Activated CD8-positive, alpha-beta T cell treated with anti-CD3 and anti-CD28 coated beads for 36 hours (primary cell): ENCODE measurements at regions of chr6 and their contacts with region 1.

Region 1: DNA sequence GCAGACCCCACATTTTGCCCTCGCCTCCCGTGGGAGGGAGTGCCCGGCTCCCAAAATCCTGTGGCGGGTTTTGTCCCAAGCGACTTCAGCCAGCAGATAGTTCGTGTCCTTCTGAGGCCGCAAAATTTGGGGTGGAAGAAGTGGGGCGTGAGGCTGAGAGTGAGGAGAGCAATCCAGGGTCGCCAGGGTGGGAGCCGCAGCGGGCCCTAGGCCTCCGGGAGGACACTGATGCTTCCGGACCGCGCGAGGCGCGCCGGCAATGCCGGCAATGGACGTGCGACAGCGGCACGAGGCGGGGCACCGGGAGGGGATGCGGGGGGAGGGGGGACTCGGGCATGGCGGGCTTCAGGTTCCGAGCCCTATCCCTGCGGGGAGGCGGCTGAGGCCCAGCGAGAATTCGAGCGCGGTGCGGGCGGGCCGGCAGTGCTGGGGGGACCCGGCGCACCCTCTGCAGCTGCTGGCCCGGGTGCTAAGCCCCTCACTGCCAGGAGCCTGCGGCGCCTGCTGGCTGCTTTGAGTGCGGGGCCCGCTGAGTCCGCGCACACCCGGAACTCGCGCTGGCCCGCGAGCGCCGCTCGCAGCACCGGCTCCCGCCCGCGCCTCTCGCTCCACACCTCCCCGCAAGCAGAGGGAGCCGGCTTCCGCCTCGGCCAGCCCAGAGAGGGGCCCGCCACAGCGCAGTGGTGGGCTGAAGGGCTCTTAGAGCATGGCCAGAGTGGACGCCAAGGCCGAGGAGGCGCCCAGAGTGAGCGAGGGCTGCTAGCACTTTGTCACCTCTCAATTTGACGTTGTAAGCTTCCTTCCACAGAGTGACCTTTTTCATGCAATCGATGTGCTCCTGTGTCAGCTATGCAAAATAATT is 143.8 kb downstream of the LPA start:
- DNase-seq: peak; percentile 64
- ATAC-seq: peak; percentile 83
- H3K4me3 Mint-ChIP-seq: peak overlapping the region; percentile 87
- H3K27ac Mint-ChIP-seq: peak overlapping the region; percentile 92
- H3K4me1 Mint-ChIP-seq: peaks cover 10% of the 10 kb centered on the region
- H3K27me3 Mint-ChIP-seq: peaks cover 3% of the 10 kb centered on the region
- CTCF ChIP-seq: peak; percentile 96

Region 2: GRCh38 chr6:159572439-159573110 is 947.7 kb before region 1 on chr6:
- CTCF ChIA-PET with region 1: no interaction called
- POLR2A ChIA-PET with region 1: no interaction called
- intact Hi-C with region 1: no loop called
- DNase-seq: no peak
- ATAC-seq: no peak
- H3K4me3 Mint-ChIP-seq: no peak overlapping the region
- H3K27ac Mint-ChIP-seq: no peak overlapping the region
- H3K4me1 Mint-ChIP-seq: no peaks in the 10 kb centered on the region
- H3K27me3 Mint-ChIP-seq: peaks cover 10% of the 10 kb centered on the region
- CTCF ChIP-seq: no peak

Region 3: DNA sequence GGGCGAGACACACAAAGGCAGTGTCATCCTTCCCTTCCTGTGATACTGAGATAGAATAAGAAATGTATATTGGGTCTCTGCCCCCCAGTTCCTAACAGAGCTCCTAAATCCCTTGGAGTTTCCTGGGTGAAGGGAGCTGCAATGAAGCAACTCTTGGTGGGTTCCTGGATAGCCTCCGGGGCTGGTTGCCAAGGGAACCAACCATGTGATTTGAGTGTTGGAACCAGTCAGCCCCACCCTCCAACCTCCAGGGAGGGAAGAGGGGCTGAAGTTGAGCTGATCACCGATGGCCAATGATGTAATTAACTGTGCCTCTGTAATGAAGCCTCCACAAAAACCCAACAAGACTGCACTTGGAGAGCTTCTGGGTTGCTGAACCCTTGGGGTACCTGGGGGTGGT is 55.5 kb before region 1 on chr6:
- CTCF ChIA-PET with region 1: interaction called, 10 read pairs
- POLR2A ChIA-PET with region 1: no interaction called
- intact Hi-C with region 1: no loop called
- DNase-seq: no peak
- ATAC-seq: no peak
- H3K4me3 Mint-ChIP-seq: no peak overlapping the region
- H3K27ac Mint-ChIP-seq: no peak overlapping the region
- H3K4me1 Mint-ChIP-seq: peaks cover 43% of the 10 kb centered on the region
- H3K27me3 Mint-ChIP-seq: peaks cover 37% of the 10 kb centered on the region
- CTCF ChIP-seq: no peak

Region 4: DNA sequence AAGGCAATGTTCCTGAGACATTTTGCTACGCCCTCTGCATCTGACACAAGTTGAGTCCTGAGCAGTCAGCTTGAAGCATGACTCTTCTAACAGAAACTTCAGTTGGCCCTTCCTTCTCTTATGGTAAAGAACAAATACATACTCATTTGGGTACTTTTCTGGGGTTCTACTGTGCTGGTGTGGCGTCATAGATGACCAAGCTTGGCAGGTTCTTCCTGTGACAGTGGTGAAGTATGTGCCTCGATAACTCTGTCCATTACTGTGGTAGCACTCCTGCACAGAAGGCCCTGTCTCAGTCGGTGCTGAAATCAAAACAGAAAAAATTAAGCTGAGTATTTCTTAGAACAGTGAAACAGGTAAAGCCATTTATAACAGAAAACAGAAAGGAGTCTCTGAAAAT is 19.6 kb before region 1 on chr6:
- CTCF ChIA-PET with region 1: interaction called, 14 read pairs
- POLR2A ChIA-PET with region 1: no interaction called
- intact Hi-C with region 1: no loop called
- DNase-seq: no peak
- ATAC-seq: no peak
- H3K4me3 Mint-ChIP-seq: no peak overlapping the region
- H3K27ac Mint-ChIP-seq: no peak overlapping the region
- H3K4me1 Mint-ChIP-seq: no peaks in the 10 kb centered on the region
- H3K27me3 Mint-ChIP-seq: no peaks in the 10 kb centered on the region
- CTCF ChIP-seq: no peak

Region 5: DNA sequence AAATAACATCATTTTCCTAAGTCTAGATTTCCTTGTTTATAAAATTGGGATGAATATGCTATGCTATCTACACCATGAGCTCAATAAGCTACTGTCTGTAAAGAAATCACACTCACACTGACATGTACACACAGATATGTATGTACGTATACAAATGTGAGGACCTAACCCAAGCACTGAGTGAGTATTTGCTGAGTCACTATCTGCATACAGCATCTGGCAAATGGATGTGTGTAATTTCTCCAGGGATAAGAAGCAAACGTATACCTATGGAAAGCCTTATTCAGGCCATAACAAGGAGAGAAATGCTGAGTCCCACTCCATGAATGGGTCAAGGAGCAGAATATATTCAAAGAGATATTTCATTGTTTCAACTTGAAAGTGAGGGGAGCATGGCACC is 10.1 kb before region 1 on chr6:
- CTCF ChIA-PET with region 1: interaction called, 32 read pairs
- POLR2A ChIA-PET with region 1: interaction called, 3 read pairs
- intact Hi-C with region 1: no loop called
- DNase-seq: no peak
- ATAC-seq: no peak
- H3K4me3 Mint-ChIP-seq: no peak overlapping the region
- H3K27ac Mint-ChIP-seq: no peak overlapping the region
- H3K4me1 Mint-ChIP-seq: no peaks in the 10 kb centered on the region
- H3K27me3 Mint-ChIP-seq: peaks cover 11% of the 10 kb centered on the region
- CTCF ChIP-seq: no peak

Region 6: DNA sequence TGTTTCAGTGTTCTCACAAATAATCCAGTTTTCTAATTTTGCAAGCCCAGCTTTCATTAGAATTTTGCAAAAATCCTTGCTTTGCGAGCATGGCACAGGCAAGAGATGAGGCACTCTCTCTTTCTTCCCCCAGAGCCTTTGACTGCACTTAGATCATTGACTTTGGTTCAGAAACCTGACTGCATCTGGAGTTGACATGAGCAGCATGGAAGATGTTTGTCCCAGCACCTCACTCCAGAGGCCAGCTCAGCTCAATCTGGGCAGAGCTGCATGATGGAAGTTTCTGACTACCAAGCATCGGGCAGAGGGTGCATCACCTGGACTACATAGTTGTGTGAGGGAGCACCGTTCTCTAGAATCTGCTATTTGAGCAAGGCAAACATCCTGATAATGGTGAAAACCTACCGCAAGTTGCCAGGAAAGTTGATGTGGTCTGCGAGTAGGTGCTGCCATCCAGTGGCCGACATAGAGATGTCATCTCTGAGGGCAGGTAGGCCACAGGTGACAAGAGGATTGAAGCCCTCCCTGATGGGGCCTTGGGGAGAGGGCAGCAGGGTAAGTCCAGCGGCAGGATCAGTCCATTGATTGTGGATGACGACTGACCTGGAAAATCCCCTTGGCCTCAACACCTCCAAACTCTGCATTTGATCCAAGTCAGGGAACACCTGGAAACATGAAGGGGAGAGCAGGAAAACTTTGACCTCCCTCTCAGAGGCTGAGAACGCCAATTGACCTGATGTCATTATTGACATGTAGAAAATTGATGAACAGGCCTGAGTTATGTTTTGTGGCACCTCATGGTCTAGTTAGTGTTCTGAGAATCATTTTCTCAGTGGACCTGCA is 147.6 kb after region 1 on chr6:
- CTCF ChIA-PET with region 1: interaction called, 5 read pairs
- POLR2A ChIA-PET with region 1: no interaction called
- intact Hi-C with region 1: loop called (anchors 2 kb)
- DNase-seq: peak; percentile 52
- ATAC-seq: peak; percentile 53
- H3K4me3 Mint-ChIP-seq: no peak overlapping the region
- H3K27ac Mint-ChIP-seq: no peak overlapping the region
- H3K4me1 Mint-ChIP-seq: no peaks in the 10 kb centered on the region
- H3K27me3 Mint-ChIP-seq: peaks cover 10% of the 10 kb centered on the region
- CTCF ChIP-seq: peak; percentile 64